Left cardiac atrium (tissue), 4 donors: ENCODE measurements at regions of chr19 and their contacts with region 1.

Region 1: DNA sequence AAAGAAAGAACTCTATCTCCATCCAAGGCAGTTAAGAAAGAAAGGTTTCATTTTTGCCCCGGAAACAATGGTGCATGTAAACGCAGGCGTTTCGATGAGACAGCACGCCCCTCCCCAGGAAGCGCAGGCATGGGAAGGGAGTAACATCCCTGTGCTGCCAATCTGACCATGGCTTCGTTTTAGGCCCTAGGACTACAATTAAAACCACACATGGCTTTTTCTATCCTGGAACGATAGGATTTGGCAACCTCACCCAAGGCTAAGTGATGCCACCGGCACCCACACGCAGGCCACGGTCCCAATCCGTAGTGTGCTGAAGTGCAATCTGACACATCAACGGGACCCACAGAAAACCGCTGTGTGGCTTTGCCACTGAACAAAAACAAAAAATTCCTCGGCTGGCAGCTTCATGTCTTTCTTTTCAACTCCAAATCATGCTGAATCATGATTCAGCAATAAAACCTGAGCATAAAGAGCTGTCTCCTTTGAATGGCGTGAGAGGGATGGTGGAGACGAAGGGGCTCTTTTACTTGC is 24.2 kb downstream of the RANBP3 start:
- DNase-seq: no peak
- ATAC-seq: peak; percentile 3 to 14

Region 2: GRCh38 chr19:5850743-5851293 is 102.9 kb before region 1 on chr19:
- intact Hi-C with region 1: no loop called
- DNase-seq: peak; percentile 52
- ATAC-seq: peak; percentile 38 to 59

Region 3: GRCh38 chr19:5913739-5914357 is 39.9 kb before region 1 on chr19 and contains the start of gene CAPS:
- intact Hi-C with region 1: loop called in 1 of 2 experiments (anchors 5 kb)
- DNase-seq: peak; percentile 63
- ATAC-seq: peak; percentile 63 to 81
- total RNA-seq, gene CAPS: 6.6 to 6.9 TPM